ENCODE measurements at regions of chr12 and their contacts with region 1.

Region 1: DNA sequence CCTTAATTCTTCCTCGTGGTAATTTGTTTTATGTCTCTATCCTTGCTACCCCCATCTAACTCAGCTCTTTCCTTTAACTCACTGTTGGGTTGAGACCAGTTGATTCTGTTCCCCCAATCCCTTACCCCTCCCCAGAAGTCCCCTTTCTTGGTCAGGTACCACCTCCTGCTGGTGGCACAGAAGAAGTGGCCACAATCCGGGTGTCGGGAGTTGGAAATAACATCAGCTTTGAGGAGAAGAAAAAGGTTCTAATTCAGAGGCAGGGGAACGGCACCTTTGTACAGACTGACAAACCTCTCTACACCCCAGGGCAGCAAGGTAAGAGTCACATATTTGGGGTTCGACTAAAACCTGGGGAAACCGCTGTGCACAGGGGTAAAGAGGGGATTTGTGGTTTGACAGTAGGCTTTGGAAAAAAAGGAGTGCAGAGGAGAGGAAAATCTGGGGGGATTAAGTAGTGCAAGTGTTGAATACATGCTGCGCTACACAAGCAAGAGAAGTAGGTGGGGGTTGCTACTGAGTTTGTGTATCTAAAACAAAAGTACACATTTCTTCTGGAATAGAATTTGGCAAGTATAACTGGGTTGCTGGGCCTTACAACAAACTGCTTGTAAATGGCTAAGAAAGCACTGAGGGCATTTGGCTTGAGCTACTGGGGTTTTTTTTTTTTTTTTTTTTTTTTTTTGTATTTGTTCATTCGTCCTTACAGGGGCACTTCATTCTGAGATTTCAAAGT is 1.3 kb downstream of the A2ML1 start:
- DNase-seq: peak; percentile 69
- H3K4me3 ChIP-seq: peak overlapping the region in 1 of 2 experiments; percentile 40; a peak in 1 of 4 replicates
- H3K27ac ChIP-seq: no peak overlapping the region
- H3K4me1 ChIP-seq: no peaks in the 10 kb centered on the region; a peak in 1 of 4 replicates
- H3K27me3 ChIP-seq: no peaks in the 10 kb centered on the region; the same call in 1 of the 2 replicates
- CTCF ChIP-seq: peak; percentile 61
- EP300 ChIP-seq: no peak
- RAD21 ChIP-seq: peak; percentile 88

Region 2: DNA sequence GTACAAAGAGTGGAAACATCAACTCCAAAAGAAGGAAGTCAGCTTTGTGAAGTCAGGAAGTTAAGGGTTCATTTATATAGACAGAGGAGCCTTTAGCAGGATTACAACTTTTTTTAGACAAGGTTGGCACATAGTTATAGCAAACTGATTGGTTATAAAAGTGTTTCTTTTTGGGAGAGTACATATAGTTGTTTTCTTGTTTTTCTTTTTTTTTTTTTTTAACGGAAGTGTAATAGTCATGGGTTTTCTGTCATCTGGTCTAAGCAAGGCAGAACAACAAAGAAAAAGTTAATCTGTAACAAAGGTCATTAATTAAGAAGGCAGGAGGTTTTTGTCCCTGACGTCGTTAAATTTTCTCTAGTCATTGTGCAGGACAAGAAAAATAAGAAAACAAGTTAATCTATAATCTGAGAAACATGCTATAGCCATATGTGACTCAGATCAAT is 148.1 kb before region 1 on chr12:
- CTCF ChIA-PET with region 1: interaction called, 161 read pairs
- POLR2A ChIA-PET with region 1: no interaction called
- DNase-seq: no peak
- H3K4me3 ChIP-seq: no peak overlapping the region
- H3K27ac ChIP-seq: no peak overlapping the region
- H3K4me1 ChIP-seq: no peaks in the 10 kb centered on the region; a peak in 1 of 4 replicates
- H3K27me3 ChIP-seq: no peaks in the 10 kb centered on the region; the same call in 1 of the 2 replicates
- CTCF ChIP-seq: no peak
- EP300 ChIP-seq: no peak
- RAD21 ChIP-seq: no peak

Region 3: GRCh38 chr12:8681041-8681902 is 142.5 kb before region 1 on chr12:
- CTCF ChIA-PET with region 1: interaction called, 161 read pairs
- POLR2A ChIA-PET with region 1: no interaction called
- DNase-seq: no peak
- H3K4me3 ChIP-seq: no peak overlapping the region; a peak in 2 of 4 replicates
- H3K27ac ChIP-seq: no peak overlapping the region
- H3K4me1 ChIP-seq: no peaks in the 10 kb centered on the region; a peak in 1 of 4 replicates
- H3K27me3 ChIP-seq: no peaks in the 10 kb centered on the region
- CTCF ChIP-seq: no peak
- EP300 ChIP-seq: no peak
- RAD21 ChIP-seq: no peak

Region 4: DNA sequence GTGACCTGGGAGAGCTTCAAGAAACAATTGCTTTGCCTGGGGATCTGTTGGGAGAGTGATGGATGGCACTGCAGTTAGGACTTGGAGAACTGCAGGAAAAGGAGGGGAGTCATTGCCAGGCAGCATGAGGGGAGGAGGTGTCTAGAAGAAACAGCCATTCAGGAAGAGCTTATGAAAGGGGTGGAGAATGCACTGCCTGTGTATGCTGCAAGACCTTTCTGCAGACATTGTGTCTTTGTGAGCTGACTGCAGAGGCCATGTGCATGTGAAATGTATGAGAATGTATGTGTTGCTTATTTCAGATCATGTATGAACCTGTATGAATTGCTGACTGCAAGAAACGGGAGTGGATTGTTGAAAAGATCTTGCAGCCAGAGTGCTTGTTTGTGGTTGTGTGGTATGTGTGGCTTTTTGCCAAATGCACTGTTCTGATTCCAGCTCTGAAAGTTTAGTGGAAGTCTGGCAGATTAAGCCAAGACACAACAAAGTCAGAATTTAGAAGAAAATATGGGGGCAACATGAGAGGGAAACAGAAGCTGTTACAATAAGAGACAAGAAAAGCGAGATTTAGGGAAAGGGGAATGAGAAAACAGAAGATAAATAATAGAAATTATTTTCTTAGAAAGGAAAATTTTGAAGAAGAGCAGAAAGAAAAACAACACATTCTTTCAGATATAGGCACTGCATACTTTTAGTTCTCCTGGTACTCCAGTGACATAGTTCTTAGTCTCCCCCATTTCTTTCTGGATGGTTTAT is 135.7 kb before region 1 on chr12:
- CTCF ChIA-PET with region 1: interaction called, 161 read pairs
- POLR2A ChIA-PET with region 1: no interaction called
- DNase-seq: peak; percentile 77
- H3K4me3 ChIP-seq: peak overlapping the region; percentile 15 to 23; a peak in 3 of 4 replicates
- H3K27ac ChIP-seq: peak overlapping the region; percentile 40 to 82; a peak in 3 of 4 replicates
- H3K4me1 ChIP-seq: peaks cover 6 to 14% of the 10 kb centered on the region in 2 experiments; a peak in 3 of 4 replicates
- H3K27me3 ChIP-seq: no peaks in the 10 kb centered on the region
- CTCF ChIP-seq: no peak
- EP300 ChIP-seq: 0 out of 4 replicates have a peak, but pooled peaks of 1 of the 2 experiments have one; percentile 18
- RAD21 ChIP-seq: no peak

Region 5: GRCh38 chr12:8837291-8837690 is 13.6 kb after region 1 on chr12:
- CTCF ChIA-PET with region 1: interaction called, 12 read pairs
- POLR2A ChIA-PET with region 1: no interaction called
- DNase-seq: no peak
- H3K4me3 ChIP-seq: no peak overlapping the region
- H3K27ac ChIP-seq: no peak overlapping the region
- H3K4me1 ChIP-seq: no peaks in the 10 kb centered on the region; a peak in 1 of 4 replicates
- H3K27me3 ChIP-seq: no peaks in the 10 kb centered on the region; the same call in 1 of the 2 replicates
- CTCF ChIP-seq: no peak
- EP300 ChIP-seq: no peak
- RAD21 ChIP-seq: no peak